ENCODE measurements at regions of chr1 and their contacts with region 1.

Region 1: DNA sequence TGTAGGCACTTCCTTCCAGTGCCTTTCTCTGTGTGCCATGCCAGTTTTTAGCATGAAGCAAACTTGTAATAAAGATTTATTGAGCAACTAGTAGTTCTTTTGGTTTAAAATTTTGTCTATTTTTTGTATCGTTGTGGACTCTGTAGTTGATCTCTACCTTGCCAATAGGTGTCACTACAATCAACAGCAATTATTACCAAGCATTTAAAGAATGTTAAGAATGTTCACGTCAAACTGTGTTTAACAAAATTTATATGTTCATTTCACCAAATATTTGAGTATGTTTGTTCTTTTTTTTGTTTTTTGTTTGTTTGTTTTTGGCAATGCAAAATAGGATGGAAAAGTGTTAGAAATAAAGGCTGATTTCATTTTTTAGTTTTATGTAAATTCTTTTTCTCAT is 208.1 kb downstream of the PATJ start:
- DNase-seq: no peak
- H3K4me3 ChIP-seq: no peak overlapping the region
- H3K27ac ChIP-seq: peak overlapping the region; percentile 71; the same call in 1 of the 2 replicates
- H3K4me1 ChIP-seq: peaks cover 7 to 22% (median 17%) of the 10 kb centered on the region in 4 experiments; a peak in 5 of 7 replicates
- H3K27me3 ChIP-seq: no peaks in the 10 kb centered on the region
- CTCF ChIP-seq: peak in 2 of 3 experiments; percentile 13 to 57; a peak in 2 of 4 replicates
- EP300 ChIP-seq: 0 out of 3 replicates have a peak, but pooled peaks of 1 of the 2 experiments have one; percentile 37
- POLR2A ChIP-seq: no peak
- RAD21 ChIP-seq: peak; percentile 56 to 66

Region 2: GRCh38 chr1:61797045-61797755 is 153.2 kb before region 1 on chr1:
- CTCF ChIA-PET with region 1: no interaction called
- POLR2A ChIA-PET with region 1: no interaction called
- DNase-seq: no peak
- H3K4me3 ChIP-seq: no peak overlapping the region
- H3K27ac ChIP-seq: no peak overlapping the region
- H3K4me1 ChIP-seq: no peaks in the 10 kb centered on the region
- H3K27me3 ChIP-seq: no peaks in the 10 kb centered on the region
- CTCF ChIP-seq: no peak
- EP300 ChIP-seq: no peak
- POLR2A ChIP-seq: no peak
- RAD21 ChIP-seq: no peak

Region 3: GRCh38 chr1:61808968-61809367 is 141.4 kb before region 1 on chr1:
- CTCF ChIA-PET with region 1: no interaction called
- POLR2A ChIA-PET with region 1: no interaction called
- DNase-seq: no peak
- H3K4me3 ChIP-seq: no peak overlapping the region
- H3K27ac ChIP-seq: no peak overlapping the region
- H3K4me1 ChIP-seq: no peaks in the 10 kb centered on the region
- H3K27me3 ChIP-seq: no peaks in the 10 kb centered on the region
- CTCF ChIP-seq: no peak
- EP300 ChIP-seq: no peak
- POLR2A ChIP-seq: no peak
- RAD21 ChIP-seq: no peak

Region 4: DNA sequence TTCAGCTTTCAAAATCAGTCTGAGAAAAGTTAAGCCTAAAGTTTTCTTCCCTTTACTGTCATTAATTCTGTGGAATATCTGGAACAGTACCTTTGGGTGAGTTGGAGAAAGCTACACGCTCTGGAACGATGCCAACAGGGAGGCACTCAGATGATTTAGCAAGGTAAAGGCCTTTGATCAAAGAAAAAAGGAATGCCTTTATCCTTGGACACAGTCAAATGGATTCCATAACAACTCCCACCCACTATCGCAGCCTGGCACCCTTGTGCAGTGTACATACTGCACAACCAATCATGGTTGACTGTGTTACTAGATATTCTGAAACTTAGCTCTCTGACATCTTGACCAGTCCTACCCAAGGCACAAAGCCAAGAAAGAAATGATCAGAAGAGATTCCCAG is 10.6 kb after region 1 on chr1:
- CTCF ChIA-PET with region 1: interaction called, 5 read pairs
- POLR2A ChIA-PET with region 1: interaction called, 13 read pairs
- DNase-seq: no peak
- H3K4me3 ChIP-seq: no peak overlapping the region
- H3K27ac ChIP-seq: no peak overlapping the region
- H3K4me1 ChIP-seq: peaks cover 2 to 10% (median 5%) of the 10 kb centered on the region in 4 experiments; a peak in 4 of 7 replicates
- H3K27me3 ChIP-seq: no peaks in the 10 kb centered on the region
- CTCF ChIP-seq: no peak
- EP300 ChIP-seq: no peak
- POLR2A ChIP-seq: no peak
- RAD21 ChIP-seq: no peak

Region 5: DNA sequence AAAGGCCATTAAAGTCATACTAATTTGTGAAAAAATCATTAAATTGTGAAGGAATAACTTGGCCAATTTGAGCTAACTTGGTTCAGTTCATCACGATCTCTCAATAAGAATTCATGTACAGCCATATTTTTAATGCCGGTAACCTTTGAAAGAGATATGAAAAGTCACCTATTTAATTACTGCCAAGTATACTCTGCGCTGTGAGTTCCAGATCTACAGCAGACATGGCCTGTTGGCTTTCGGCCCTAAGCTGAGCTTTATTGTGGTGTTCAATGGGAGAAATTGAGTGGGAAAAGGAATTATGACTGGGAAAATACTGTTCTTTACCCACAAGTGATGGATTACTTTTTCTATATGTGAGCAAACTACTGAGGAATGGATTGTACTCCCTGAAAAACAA is 84.4 kb after region 1 on chr1:
- CTCF ChIA-PET with region 1: interaction called, 12 read pairs
- POLR2A ChIA-PET with region 1: no interaction called
- DNase-seq: no peak
- H3K4me3 ChIP-seq: no peak overlapping the region
- H3K27ac ChIP-seq: no peak overlapping the region
- H3K4me1 ChIP-seq: peaks cover 5 to 13% (median 11%) of the 10 kb centered on the region in 4 experiments
- H3K27me3 ChIP-seq: no peaks in the 10 kb centered on the region
- CTCF ChIP-seq: no peak
- EP300 ChIP-seq: no peak
- POLR2A ChIP-seq: no peak
- RAD21 ChIP-seq: no peak

Region 6: DNA sequence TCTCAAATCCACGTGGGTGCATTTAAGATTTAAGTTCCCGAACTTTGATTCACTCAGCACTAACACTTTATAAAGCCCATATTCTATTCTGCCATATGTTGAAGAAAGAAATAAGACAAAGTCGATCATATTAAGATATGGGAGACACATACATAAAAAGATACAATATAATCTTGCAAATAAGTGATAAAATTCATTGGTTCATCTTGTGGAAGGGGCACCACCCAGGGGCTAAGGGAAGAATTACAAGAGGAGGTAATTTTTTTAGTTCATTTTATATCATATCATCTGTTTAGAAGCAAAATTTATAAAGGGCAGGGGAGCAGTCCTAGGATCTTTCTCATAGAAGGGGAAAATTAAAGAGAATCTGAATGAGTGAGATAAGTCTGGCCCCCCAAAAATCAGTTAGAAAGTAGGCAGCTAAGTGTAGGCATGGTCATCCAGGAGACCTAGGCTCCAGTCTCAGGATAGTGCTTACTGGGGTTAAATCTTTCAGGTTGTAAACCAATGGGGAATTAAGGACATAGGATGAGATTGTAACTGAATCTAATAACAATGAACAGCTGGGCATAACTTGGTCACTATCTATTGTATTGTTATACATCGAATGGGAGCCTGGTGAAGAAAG is 120.1 kb after region 1 on chr1:
- CTCF ChIA-PET with region 1: interaction called, 15 read pairs
- POLR2A ChIA-PET with region 1: no interaction called
- DNase-seq: no peak
- H3K4me3 ChIP-seq: no peak overlapping the region
- H3K27ac ChIP-seq: no peak overlapping the region
- H3K4me1 ChIP-seq: no peaks in the 10 kb centered on the region
- H3K27me3 ChIP-seq: no peaks in the 10 kb centered on the region
- CTCF ChIP-seq: peak in 2 of 3 experiments; percentile 20 to 59; a peak in 2 of 4 replicates
- EP300 ChIP-seq: no peak
- POLR2A ChIP-seq: no peak
- RAD21 ChIP-seq: peak; percentile 62 to 76

Measured in H1 (cell line).